Prostate gland (tissue), 2 donors: ENCODE measurements at regions of chr16 and their contacts with region 1.

Region 1: GRCh38 chr16:57316390-57317017 is 32.0 kb upstream of the PLLP start:
- DNase-seq: no peak
- H3K4me3 ChIP-seq: no peak overlapping the region
- H3K27ac ChIP-seq: peak overlapping the region; percentile 47 to 51
- H3K4me1 ChIP-seq: no peaks in the 10 kb centered on the region
- H3K27me3 ChIP-seq: no peaks in the 10 kb centered on the region
- CTCF ChIP-seq: no peak
- POLR2A ChIP-seq: no peak

Region 2: DNA sequence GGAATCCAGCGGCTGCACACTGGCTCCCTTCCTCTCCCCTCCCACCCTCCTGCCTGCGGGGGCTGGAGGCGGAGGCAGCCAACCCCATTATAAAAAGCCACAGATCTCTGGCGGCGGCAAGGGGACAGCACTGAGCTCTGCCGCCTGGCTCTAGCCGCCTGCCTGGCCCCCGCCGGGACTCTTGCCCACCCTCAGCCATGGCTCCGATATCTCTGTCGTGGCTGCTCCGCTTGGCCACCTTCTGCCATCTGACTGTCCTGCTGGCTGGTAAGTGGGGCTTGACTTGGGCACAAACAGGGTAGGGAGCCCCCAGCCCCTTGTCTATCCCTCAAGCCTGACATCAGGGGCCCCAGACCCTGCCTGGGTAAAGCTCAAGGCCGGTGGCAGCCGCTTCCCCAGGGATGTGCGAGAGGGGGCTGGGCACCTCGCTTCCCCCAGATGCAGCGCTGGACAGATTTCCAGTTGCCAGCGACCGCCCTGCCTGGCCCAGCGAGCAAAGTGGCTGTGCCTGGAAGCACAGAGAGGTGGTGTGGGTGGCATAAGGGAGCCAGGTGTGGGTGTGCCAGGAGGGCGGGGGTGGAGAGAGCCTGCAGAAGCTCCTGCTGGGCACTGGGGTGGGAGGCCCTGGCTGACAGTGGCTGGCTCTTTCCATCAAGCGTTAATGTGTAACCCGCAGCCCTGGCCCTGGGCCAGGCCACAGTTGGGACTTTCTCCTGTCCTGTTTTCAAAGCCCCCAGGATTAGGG is 56.0 kb after region 1 on chr16 and contains the start of gene CX3CL1:
- intact Hi-C with region 1: loop called (anchors 5 kb)
- DNase-seq: peak; percentile 85
- H3K4me3 ChIP-seq: peak within 1 kb of the TSS; percentile 52 to 53
- H3K27ac ChIP-seq: peak within 1 kb of the TSS; percentile 90
- H3K4me1 ChIP-seq: peaks cover 7% of the 10 kb centered on the region
- H3K27me3 ChIP-seq: no peaks in the 10 kb centered on the region
- CTCF ChIP-seq: peak in 2 of 4 experiments; percentile 25 to 35
- POLR2A ChIP-seq: peak; percentile 98
- total RNA-seq, gene CX3CL1: 30.2 to 52.6 TPM

Region 3: DNA sequence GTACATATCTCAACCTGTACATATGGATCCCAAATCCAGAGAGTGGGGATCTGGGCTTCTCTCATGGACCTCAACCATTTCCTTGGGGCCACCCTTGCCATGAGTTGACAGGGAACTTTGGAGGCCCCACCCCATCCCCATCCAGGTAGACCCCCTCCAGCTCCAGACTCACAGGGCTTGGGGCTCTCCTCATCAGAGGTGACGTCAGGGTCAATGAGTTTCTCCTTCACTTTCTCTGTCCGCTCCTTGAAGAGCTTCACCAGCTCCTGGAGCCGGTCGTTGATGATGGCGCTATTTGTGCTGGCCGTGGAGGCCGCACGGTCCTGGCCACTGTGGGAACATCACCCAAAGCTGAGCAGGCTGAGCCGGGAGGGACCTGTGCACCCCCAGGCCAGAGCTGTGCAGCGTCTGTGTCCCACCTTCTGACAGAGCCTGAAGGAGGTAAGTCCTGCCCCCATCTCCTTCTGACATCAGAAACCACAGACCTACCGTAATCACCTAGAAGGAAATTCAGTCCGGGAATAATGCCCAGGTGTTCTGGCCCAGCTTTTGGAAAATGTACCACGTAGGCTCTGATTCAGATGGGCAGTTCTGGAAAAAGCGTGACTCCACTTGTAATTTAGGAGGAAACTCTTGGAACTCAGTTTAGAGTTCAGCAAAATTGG is 603.8 kb after region 1 on chr16:
- intact Hi-C with region 1: no loop called
- DNase-seq: no peak
- H3K4me3 ChIP-seq: no peak overlapping the region
- H3K27ac ChIP-seq: no peak overlapping the region
- H3K4me1 ChIP-seq: no peaks in the 10 kb centered on the region
- H3K27me3 ChIP-seq: no peaks in the 10 kb centered on the region
- CTCF ChIP-seq: no peak
- POLR2A ChIP-seq: no peak